GM12878 (cell line): ENCODE measurements at regions of chr11 and their contacts with region 1.

Region 1: GRCh38 chr11:67572747-67573419 is 10.7 kb upstream of the GSTP1 start:
- DNase-seq: no peak
- ATAC-seq: peak; percentile 77
- H3K4me3 ChIP-seq: no peak overlapping the region
- H3K27ac ChIP-seq: no peak overlapping the region
- H3K4me1 ChIP-seq: peaks cover 5% of the 10 kb centered on the region
- H3K27me3 ChIP-seq: no peaks in the 10 kb centered on the region; a peak in 1 of 4 replicates
- CTCF ChIP-seq: peak; percentile 56 to 85 (median 62)
- EP300 ChIP-seq: no peak
- POLR2A ChIP-seq: no peak
- RAD21 ChIP-seq: peak; percentile 73

Region 2: DNA sequence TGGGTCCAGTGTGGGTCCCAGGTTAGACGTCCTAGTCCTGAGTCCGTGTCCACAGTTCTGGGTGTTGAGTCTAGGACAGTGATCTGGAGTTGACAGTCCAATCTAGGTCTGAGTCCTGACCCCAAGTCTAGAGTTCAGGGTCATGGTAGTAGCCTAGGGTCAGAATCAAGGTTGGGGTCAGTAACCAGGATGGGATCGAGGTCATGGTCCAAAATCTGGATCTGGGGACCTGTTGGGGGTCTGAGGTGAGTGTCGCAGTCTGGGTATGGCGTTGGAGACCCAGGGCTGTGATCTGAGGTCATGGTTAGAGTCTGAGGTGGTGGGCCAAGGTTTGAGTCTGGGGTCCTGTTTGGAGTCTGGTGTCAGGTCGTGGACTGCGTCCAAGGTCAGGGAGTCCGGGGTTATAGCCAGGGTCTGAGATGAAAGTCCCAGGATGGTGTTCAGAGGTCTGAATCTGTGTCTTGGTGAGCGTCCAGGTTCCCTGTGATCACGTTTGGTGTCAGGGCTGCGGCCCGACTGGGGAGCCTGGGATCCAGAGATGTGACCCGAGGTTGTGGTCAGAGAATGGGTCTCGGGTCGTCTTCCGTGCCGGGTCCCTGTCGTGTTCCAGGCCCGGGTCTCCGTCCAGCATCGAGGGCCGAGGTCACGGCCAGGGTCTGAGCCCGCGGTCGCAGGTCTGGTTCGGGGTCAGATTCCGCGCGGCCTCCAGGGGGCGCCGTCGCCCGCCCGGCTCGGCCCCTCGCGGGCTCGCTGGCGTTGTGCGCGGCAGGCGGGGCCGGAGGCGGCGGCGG is 307.1 kb before region 1 on chr11:
- CTCF ChIA-PET with region 1: no interaction called
- POLR2A ChIA-PET with region 1: no interaction called
- RAD21 ChIA-PET with region 1: no interaction called
- SMC1A ChIA-PET with region 1: no interaction called
- in situ Hi-C with region 1: no loop called
- intact Hi-C with region 1: no loop called
- DNase-seq: no peak
- ATAC-seq: peak; percentile 54
- H3K4me3 ChIP-seq: no peak overlapping the region
- H3K27ac ChIP-seq: 0 out of 2 replicates have a peak overlapping the region, but pooled peaks have one; percentile 33
- H3K4me1 ChIP-seq: peaks cover 36% of the 10 kb centered on the region
- H3K27me3 ChIP-seq: no peaks in the 10 kb centered on the region
- CTCF ChIP-seq: peak; percentile 63 to 84 (median 70); a peak in 5 of 6 replicates
- EP300 ChIP-seq: no peak
- POLR2A ChIP-seq: no peak
- RAD21 ChIP-seq: peak; percentile 80

Region 3: GRCh38 chr11:67484847-67485311 is 88.0 kb before region 1 on chr11:
- CTCF ChIA-PET with region 1: no interaction called
- POLR2A ChIA-PET with region 1: no interaction called
- RAD21 ChIA-PET with region 1: no interaction called
- SMC1A ChIA-PET with region 1: no interaction called
- in situ Hi-C with region 1: no loop called
- intact Hi-C with region 1: no loop called
- DNase-seq: peak; percentile 76
- ATAC-seq: peak; percentile 47
- H3K4me3 ChIP-seq: peak overlapping the region; percentile 67
- H3K27ac ChIP-seq: peak overlapping the region; percentile 70
- H3K4me1 ChIP-seq: peaks cover 44% of the 10 kb centered on the region
- H3K27me3 ChIP-seq: no peaks in the 10 kb centered on the region
- CTCF ChIP-seq: no peak
- EP300 ChIP-seq: no peak
- POLR2A ChIP-seq: peak; percentile 83
- RAD21 ChIP-seq: peak; percentile 4; the same call in 1 of the 2 replicates

Region 4: DNA sequence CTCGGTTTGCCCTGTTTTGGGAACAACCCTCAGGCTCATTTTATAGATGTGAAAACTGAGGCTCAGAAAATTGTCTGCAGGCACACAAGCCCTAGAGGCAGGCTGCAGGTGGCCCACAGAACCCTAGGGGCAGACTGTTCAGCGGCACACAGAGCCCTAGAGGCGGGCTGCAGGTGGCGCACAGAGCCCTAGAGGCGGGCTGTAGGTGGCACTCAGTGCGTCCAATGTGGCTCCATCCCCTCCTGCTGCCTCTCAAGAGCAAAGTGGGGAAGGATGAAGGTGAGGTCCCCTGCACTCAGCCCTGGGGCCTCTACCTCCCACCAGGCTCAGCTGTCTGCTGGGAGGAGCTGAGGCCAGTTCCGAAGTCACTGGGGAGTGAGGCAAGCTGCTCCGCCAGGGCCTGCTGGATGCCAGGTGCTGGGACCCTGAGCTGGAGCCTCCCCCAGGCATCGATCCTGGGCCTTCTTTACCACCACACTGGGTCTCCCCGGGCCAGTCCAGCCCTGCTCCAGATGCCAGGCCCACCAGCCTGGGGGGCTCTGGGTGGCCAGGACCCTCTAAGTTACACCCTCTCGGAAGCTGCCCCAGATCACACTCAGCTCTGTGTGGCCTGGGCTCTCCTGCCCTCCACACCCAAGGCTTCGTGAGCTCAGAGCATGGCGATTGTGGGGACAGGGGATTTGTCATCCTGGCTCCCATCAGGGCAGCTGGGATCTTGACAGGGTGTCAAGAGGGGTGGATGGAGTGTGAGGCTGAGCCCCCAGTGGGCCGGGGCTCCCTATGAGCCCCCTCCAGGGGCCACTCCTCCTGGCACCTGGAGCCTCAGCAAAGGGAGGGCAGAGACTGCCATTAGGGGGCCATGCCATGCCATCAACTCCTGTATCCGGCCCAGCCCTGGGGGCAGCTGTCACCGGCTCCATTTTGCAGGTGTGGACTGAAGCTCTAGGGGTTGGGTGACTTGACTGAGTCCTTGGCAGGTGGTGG is 75.5 kb after region 1 on chr11:
- CTCF ChIA-PET with region 1: interaction called, 12 read pairs
- POLR2A ChIA-PET with region 1: interaction called, 6 read pairs
- RAD21 ChIA-PET with region 1: interaction called, 4 read pairs
- SMC1A ChIA-PET with region 1: interaction called, 3 read pairs
- in situ Hi-C with region 1: no loop called
- intact Hi-C with region 1: no loop called
- DNase-seq: no peak
- ATAC-seq: peak; percentile 84
- H3K4me3 ChIP-seq: peak overlapping the region; percentile 9; the same call in 1 of the 2 replicates
- H3K27ac ChIP-seq: peak overlapping the region; percentile 78
- H3K4me1 ChIP-seq: peaks cover 61% of the 10 kb centered on the region
- H3K27me3 ChIP-seq: no peaks in the 10 kb centered on the region
- CTCF ChIP-seq: peak; percentile 71 to 72 (median 72)
- EP300 ChIP-seq: no peak
- POLR2A ChIP-seq: peak; percentile 43; the same call in 1 of the 2 replicates
- RAD21 ChIP-seq: peak; percentile 52